Aorta (tissue), 5 donors: ENCODE measurements at regions of chr3 and their contacts with region 1.

Region 1: DNA sequence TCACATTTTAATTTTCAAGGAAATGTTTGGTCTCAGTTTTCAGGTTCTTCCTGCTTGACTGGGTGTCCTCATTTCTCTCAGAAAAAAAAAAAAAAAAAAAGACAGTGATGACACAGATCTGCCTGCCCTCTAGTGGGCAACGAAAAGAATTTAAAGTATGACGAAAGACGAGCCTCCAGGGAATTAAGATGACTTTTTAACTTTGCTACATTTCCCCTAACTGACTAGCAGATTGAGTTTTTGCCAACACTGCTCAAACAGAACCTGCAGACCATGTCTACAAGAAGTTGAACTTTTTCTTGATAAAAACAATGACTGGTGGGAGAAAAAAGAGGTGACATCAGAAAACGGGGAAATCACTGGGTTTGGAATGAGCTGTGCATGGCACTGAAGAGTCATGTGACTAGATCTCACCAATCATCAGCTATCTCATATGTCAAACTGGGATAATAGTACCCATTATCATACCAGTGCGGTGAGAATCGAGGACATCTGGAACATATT is 40.8 kb downstream of the EOMES start:
- DNase-seq: no peak
- ATAC-seq: peak; percentile 67
- H3K4me3 ChIP-seq: no peak overlapping the region
- H3K27ac ChIP-seq: no peak overlapping the region
- H3K4me1 ChIP-seq: peaks cover 4% of the 10 kb centered on the region in 2 donors
- H3K27me3 ChIP-seq: no peaks in the 10 kb centered on the region

Region 2: GRCh38 chr3:27312044-27312668 is 369.1 kb before region 1 on chr3:
- intact Hi-C with region 1: loop called (anchors 10 kb)
- DNase-seq: no peak
- ATAC-seq: peak; percentile 75
- H3K4me3 ChIP-seq: no peak overlapping the region
- H3K27ac ChIP-seq: no peak overlapping the region
- H3K4me1 ChIP-seq: no peaks in the 10 kb centered on the region
- H3K27me3 ChIP-seq: no peaks in the 10 kb centered on the region

Region 3: DNA sequence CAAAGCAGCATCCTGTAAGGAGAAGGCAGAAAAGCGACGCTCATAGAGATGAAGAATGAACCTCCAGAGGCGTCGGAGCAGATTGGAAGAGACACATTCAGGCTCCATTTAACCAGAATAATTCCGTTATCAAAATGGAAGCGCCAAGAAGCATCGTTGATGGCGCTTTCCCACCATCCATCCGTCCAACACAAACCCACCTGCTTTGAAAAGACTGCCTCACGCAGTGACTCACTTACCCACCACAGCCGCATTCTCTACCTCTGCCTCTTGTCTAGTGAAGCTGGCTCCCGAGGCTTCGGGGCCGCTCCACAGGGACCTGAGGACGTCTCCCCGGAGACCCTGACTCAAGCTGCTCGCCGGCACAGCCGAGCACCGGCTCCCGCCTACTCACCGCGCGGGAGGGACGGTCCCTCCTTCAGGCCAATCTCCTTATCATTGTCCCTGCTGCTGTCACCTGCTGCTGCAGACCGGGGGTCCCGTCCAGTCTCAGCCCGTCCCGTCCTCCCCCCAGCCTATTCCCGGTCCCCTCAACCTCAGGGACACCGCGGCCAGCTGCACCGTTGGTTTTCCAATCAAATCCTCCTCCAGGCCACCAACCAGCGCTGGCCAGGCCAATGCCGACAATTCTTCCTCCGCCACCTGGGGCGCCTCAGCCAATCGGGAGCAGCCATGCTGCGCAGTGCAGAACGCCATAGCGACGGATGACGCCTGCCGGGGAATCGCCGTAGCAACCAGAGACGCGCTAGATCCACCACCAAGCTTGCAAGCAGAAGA is 312.3 kb before region 1 on chr3 and contains the start of gene NEK10:
- intact Hi-C with region 1: loop called in 1 of 2 experiments (anchors 10 kb)
- DNase-seq: peak; percentile 94
- ATAC-seq: peak; percentile 97
- H3K4me3 ChIP-seq: peak within 1 kb of the TSS; percentile 2 to 23
- H3K27ac ChIP-seq: no peak within 1 kb of the TSS
- H3K4me1 ChIP-seq: no peaks in the 10 kb centered on the region
- H3K27me3 ChIP-seq: no peaks in the 10 kb centered on the region
- total RNA-seq, gene NEK10: 1.2 to 3.5 TPM

Region 4: DNA sequence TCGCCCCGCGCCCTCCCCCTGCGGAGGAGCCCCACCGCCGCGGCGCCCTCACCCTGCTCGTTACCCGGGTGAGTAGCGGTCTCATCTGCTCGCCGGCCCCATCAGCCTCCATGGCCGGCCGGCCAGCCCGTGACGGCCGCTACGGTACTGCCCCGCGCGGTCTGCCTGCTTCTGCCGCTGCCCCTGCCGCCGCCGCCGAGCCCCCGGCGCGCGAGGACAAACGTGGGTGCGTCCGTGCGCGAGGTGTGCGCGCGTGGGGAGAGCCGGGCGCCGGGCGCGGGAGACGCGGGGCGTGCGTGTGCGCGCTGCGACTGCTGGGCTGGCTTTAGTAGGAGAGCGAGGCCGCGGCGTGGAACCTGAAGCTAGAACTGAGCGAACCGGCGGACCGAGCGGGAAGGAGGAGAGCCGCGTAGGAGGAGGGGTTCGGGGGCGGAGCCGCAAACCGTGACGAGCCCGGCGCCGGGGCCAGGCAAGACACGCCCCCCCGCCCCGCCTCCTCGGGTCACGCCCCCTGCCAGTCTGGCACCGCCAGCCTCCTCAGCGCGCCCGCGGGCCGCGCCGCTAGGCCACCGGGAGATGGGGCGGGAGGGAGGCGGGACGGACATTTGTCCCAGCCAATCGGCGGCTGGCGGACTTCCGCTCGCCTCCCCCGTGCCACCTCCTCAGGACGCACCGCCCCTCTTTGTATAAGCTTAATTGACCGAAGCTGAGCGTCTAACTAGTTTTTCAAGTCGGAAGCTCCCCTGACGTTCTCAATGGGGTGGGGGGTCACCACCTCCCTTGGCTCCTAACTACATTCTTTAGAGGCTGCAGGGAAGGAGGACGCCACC is 197.1 kb before region 1 on chr3 and contains the start of gene SLC4A7:
- intact Hi-C with region 1: loop called in 1 of 2 experiments (anchors 5 kb)
- DNase-seq: peak; percentile 99 to 100
- ATAC-seq: peak; percentile 99
- H3K4me3 ChIP-seq: peak within 1 kb of the TSS; percentile 84 to 96
- H3K27ac ChIP-seq: peak within 1 kb of the TSS; percentile 71 to 91
- H3K4me1 ChIP-seq: no peaks in the 10 kb centered on the region
- H3K27me3 ChIP-seq: no peaks in the 10 kb centered on the region
- total RNA-seq, gene SLC4A7: 61.0 to 62.8 TPM

Region 5: GRCh38 chr3:27533718-27534573 is 147.4 kb before region 1 on chr3:
- intact Hi-C with region 1: loop called in 1 of 2 experiments (anchors 1 kb)
- DNase-seq: peak; percentile 91
- ATAC-seq: peak; percentile 89
- H3K4me3 ChIP-seq: no peak overlapping the region
- H3K27ac ChIP-seq: peak overlapping the region in 1 of 2 donors; percentile 93
- H3K4me1 ChIP-seq: peaks cover 0 to 3% of the 10 kb centered on the region in 2 donors
- H3K27me3 ChIP-seq: no peaks in the 10 kb centered on the region

Region 6: GRCh38 chr3:27639271-27639670 is 42.0 kb before region 1 on chr3:
- intact Hi-C with region 1: loop called in 1 of 2 experiments (anchors 5 kb)
- DNase-seq: no peak
- ATAC-seq: no peak
- H3K4me3 ChIP-seq: no peak overlapping the region
- H3K27ac ChIP-seq: no peak overlapping the region
- H3K4me1 ChIP-seq: peaks cover 0 to 4% of the 10 kb centered on the region in 2 donors
- H3K27me3 ChIP-seq: no peaks in the 10 kb centered on the region